ENCODE measurements at regions of chr1 and their contacts with region 1.

Region 1: GRCh38 chr1:109643385-109644230 is 12.3 kb upstream of the GSTM4 start:
- DNase-seq: peak; percentile 75 to 83 (median 79)
- H3K4me3 ChIP-seq: no peak overlapping the region
- H3K4me3 Mint-ChIP-seq: no peak overlapping the region
- H3K27ac ChIP-seq: no peak overlapping the region
- H3K27ac Mint-ChIP-seq: peak overlapping the region in 1 of 7 donors; percentile 42
- H3K4me1 ChIP-seq: peaks cover 14% of the 10 kb centered on the region
- H3K4me1 Mint-ChIP-seq: peaks cover 4 to 14% (median 8%) of the 10 kb centered on the region in 4 donors
- H3K27me3 ChIP-seq: no peaks in the 10 kb centered on the region
- H3K27me3 Mint-ChIP-seq: peaks cover 2% of the 10 kb centered on the region in 2 donors

Region 2: GRCh38 chr1:109432336-109432735 is 211.3 kb before region 1 on chr1:
- CTCF ChIA-PET with region 1: no interaction called
- POLR2A ChIA-PET with region 1: no interaction called
- intact Hi-C with region 1: no loop called
- DNase-seq: no peak
- H3K4me3 ChIP-seq: no peak overlapping the region
- H3K4me3 Mint-ChIP-seq: no peak overlapping the region
- H3K27ac ChIP-seq: no peak overlapping the region
- H3K27ac Mint-ChIP-seq: no peak overlapping the region
- H3K4me1 ChIP-seq: peaks cover 2% of the 10 kb centered on the region
- H3K4me1 Mint-ChIP-seq: peaks cover 1 to 4% (median 2%) of the 10 kb centered on the region in 4 donors
- H3K27me3 ChIP-seq: no peaks in the 10 kb centered on the region
- H3K27me3 Mint-ChIP-seq: peaks cover 6 to 12% of the 10 kb centered on the region in 2 donors

Region 3: GRCh38 chr1:109532365-109533136 is 111.1 kb before region 1 on chr1:
- CTCF ChIA-PET with region 1: interaction called, 314 read pairs
- POLR2A ChIA-PET with region 1: no interaction called
- intact Hi-C with region 1: no loop called
- DNase-seq: peak; percentile 84 to 90 (median 86)
- H3K4me3 ChIP-seq: peak overlapping the region; percentile 55 to 71
- H3K4me3 Mint-ChIP-seq: peak overlapping the region; percentile 77 to 91 (median 86)
- H3K27ac ChIP-seq: peak overlapping the region; percentile 29
- H3K27ac Mint-ChIP-seq: peak overlapping the region; percentile 61 to 96 (median 89)
- H3K4me1 ChIP-seq: peaks cover 25% of the 10 kb centered on the region
- H3K4me1 Mint-ChIP-seq: peaks cover 15 to 37% (median 25%) of the 10 kb centered on the region in 4 donors
- H3K27me3 ChIP-seq: no peaks in the 10 kb centered on the region
- H3K27me3 Mint-ChIP-seq: peaks cover 0 to 2% of the 10 kb centered on the region in 2 donors

Region 4: GRCh38 chr1:109610609-109611307 is 32.9 kb before region 1 on chr1:
- CTCF ChIA-PET with region 1: interaction called, 12 read pairs
- POLR2A ChIA-PET with region 1: no interaction called
- intact Hi-C with region 1: no loop called
- DNase-seq: no peak
- H3K4me3 ChIP-seq: no peak overlapping the region
- H3K4me3 Mint-ChIP-seq: no peak overlapping the region
- H3K27ac ChIP-seq: no peak overlapping the region
- H3K27ac Mint-ChIP-seq: peak overlapping the region in 3 of 7 donors; percentile 32 to 80 (median 57)
- H3K4me1 ChIP-seq: peaks cover 4% of the 10 kb centered on the region
- H3K4me1 Mint-ChIP-seq: peaks cover 2 to 6% (median 2%) of the 10 kb centered on the region in 4 donors
- H3K27me3 ChIP-seq: no peaks in the 10 kb centered on the region
- H3K27me3 Mint-ChIP-seq: no peaks in the 10 kb centered on the region

Region 5: GRCh38 chr1:109655601-109656519 is 12.3 kb after region 1 on chr1 and contains the start of gene GSTM4:
- CTCF ChIA-PET with region 1: interaction called, 106 read pairs
- POLR2A ChIA-PET with region 1: interaction called, 7 read pairs
- intact Hi-C with region 1: no loop called
- DNase-seq: peak; percentile 19 to 60 (median 42)
- H3K4me3 ChIP-seq: peak within 1 kb of the TSS; percentile 49 to 70
- H3K4me3 Mint-ChIP-seq: peak within 1 kb of the TSS; percentile 89 to 98 (median 94)
- H3K27ac ChIP-seq: peak within 1 kb of the TSS; percentile 52
- H3K27ac Mint-ChIP-seq: peak within 1 kb of the TSS; percentile 72 to 95 (median 89)
- H3K4me1 ChIP-seq: peaks cover 12% of the 10 kb centered on the region
- H3K4me1 Mint-ChIP-seq: peaks cover 7 to 25% (median 15%) of the 10 kb centered on the region in 4 donors
- H3K27me3 ChIP-seq: peaks cover 4% of the 10 kb centered on the region
- H3K27me3 Mint-ChIP-seq: peaks cover 1 to 7% of the 10 kb centered on the region in 2 donors
- total RNA-seq, gene GSTM4: 12.6 to 14.2 TPM

Region 6: GRCh38 chr1:109773146-109773899 is 129.7 kb after region 1 on chr1:
- CTCF ChIA-PET with region 1: interaction called, 394 read pairs
- POLR2A ChIA-PET with region 1: interaction called, 17 read pairs
- intact Hi-C with region 1: loop called (anchors 1 kb)
- DNase-seq: peak; percentile 68 to 76 (median 74)
- H3K4me3 ChIP-seq: no peak overlapping the region
- H3K4me3 Mint-ChIP-seq: no peak overlapping the region
- H3K27ac ChIP-seq: no peak overlapping the region
- H3K27ac Mint-ChIP-seq: peak overlapping the region in 5 of 7 donors; percentile 29 to 56 (median 42)
- H3K4me1 ChIP-seq: peaks cover 6% of the 10 kb centered on the region
- H3K4me1 Mint-ChIP-seq: peaks cover 9 to 21% (median 10%) of the 10 kb centered on the region in 4 donors
- H3K27me3 ChIP-seq: no peaks in the 10 kb centered on the region
- H3K27me3 Mint-ChIP-seq: peaks cover 0 to 3% of the 10 kb centered on the region in 2 donors

Region 7: DNA sequence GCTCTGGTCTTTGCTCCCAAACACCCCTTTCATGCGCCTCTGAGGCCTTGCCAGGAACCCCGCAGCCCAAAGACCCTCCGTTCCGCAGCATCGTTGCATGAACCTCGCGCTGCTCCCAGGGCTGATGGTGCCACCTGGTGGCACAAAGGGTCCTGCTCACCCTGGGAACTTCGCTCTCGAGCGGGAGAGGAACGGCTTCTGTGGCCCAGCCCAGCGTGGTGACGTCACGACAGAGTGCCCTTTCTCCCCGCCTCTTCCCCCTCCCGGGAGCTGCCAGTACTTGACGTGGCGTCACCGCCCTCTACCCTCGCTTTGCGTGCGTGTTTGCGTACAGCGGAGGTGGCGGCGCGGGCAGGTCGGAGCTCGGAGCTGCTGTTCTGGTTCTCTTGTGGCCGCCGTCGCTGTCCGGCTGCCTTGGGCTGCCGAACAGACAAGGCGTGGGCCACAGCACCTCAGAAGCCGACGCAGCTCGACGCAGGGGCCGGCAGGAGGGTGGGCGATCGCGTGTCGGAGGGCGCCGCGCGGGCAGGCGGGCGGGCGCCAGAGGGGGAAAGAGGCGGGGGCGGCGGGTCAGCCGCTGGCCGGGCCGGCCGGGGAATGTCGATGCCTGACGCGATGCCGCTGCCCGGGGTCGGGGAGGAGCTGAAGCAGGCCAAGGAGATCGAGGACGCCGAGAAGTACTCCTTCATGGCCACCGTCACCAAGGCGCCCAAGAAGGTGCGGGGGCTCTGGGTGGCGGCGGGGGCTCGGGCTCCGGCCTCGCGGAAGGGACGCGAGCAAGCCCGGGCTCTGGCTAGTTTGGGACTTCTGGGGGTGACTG is 341.1 kb after region 1 on chr1 and contains the start of gene AHCYL1:
- CTCF ChIA-PET with region 1: interaction called, 115 read pairs
- POLR2A ChIA-PET with region 1: interaction called, 4 read pairs
- intact Hi-C with region 1: loop called (anchors 1 kb)
- DNase-seq: peak; percentile 98 to 99 (median 99)
- H3K4me3 ChIP-seq: peak within 1 kb of the TSS; percentile 58 to 75
- H3K4me3 Mint-ChIP-seq: peak within 1 kb of the TSS; percentile 97 to 100 (median 99)
- H3K27ac ChIP-seq: peak within 1 kb of the TSS; percentile 82
- H3K27ac Mint-ChIP-seq: peak within 1 kb of the TSS; percentile 96 to 99 (median 99)
- H3K4me1 ChIP-seq: peaks cover 31% of the 10 kb centered on the region
- H3K4me1 Mint-ChIP-seq: peaks cover 25 to 48% (median 35%) of the 10 kb centered on the region in 4 donors
- H3K27me3 ChIP-seq: no peaks in the 10 kb centered on the region
- H3K27me3 Mint-ChIP-seq: no peaks in the 10 kb centered on the region
- total RNA-seq, gene AHCYL1: 44.2 to 45.1 TPM